Posterior vena cava (tissue), 2 donors: ENCODE measurements at regions of chr19 and their contacts with region 1.

Region 1: GRCh38 chr19:10403137-10404021 is at the start of gene CDC37:
- DNase-seq: peak; percentile 99
- total RNA-seq, gene CDC37: 106 to 109 TPM

Region 2: DNA sequence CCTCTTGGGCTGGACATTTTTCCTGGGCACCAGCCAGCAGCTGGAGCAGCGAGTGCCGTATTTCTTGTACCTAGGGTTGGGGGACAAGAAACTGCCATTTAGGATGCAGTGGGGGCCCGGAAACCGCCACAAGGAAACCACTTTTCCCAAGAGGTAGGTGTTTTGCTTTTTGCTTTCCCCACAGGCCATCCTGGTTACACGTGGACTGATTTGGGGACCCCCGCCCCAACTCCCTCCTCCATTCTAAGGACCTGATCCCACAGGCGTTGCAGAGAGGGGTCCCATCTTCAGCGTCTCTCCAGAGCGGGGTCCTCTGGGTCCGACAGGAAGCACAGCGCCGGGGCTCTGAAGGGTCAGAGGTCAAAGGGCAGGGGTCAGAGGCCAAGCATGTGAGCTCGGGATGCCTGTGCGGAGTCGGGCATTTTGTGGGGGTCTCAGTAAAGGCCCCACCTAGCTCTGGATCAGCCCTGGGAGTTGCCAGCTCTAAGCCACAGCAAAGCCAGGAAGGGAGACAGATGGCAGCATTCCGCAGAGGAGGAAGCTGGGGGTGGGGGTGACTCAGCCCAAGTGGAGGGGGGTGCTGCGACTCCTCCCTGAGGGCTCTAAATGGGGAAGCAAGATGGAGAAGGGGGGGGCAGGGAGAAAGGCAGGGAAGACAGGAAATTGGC is 98.1 kb before region 1 on chr19:
- intact Hi-C with region 1: no loop called
- DNase-seq: no peak

Region 3: DNA sequence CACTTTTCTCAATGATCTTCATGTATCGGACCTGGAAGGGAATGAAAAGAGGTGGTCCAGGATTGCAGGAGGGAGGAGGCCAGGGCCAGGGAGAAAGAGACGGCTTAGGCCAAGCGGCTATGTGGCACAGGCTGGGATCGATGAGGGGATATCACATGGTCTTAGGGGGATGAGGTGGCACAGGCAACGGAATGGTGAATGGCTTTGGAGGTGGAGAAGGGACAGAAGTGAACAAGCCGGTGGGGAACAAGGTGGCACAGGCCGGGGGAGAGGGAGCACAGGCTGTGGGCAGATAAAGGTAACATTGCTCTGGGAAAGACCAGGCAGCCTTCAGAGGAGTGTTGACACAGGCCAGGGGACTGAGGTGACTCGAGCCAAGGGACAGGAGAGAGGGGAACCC is 171.1 kb after region 1 on chr19:
- intact Hi-C with region 1: loop called in 1 of 2 experiments (anchors 10 kb)
- DNase-seq: no peak